Heart right ventricle (tissue), 16 donors: ENCODE measurements at regions of chr18 and their contacts with region 1.

Region 1: GRCh38 chr18:27750014-27750413 is 426.9 kb downstream of the CDH2 start:
- DNase-seq: peak in 1 of 2 donors; percentile 29
- ATAC-seq: peak in 7 of 8 donors; percentile 38 to 84 (median 77)
- H3K4me3 ChIP-seq: no peak overlapping the region
- H3K27ac ChIP-seq: no peak overlapping the region
- H3K4me1 ChIP-seq: no peaks in the 10 kb centered on the region
- H3K27me3 ChIP-seq: no peaks in the 10 kb centered on the region
- CTCF ChIP-seq: peak in 7 of 9 donors; percentile 54 to 73 (median 65)

Region 2: DNA sequence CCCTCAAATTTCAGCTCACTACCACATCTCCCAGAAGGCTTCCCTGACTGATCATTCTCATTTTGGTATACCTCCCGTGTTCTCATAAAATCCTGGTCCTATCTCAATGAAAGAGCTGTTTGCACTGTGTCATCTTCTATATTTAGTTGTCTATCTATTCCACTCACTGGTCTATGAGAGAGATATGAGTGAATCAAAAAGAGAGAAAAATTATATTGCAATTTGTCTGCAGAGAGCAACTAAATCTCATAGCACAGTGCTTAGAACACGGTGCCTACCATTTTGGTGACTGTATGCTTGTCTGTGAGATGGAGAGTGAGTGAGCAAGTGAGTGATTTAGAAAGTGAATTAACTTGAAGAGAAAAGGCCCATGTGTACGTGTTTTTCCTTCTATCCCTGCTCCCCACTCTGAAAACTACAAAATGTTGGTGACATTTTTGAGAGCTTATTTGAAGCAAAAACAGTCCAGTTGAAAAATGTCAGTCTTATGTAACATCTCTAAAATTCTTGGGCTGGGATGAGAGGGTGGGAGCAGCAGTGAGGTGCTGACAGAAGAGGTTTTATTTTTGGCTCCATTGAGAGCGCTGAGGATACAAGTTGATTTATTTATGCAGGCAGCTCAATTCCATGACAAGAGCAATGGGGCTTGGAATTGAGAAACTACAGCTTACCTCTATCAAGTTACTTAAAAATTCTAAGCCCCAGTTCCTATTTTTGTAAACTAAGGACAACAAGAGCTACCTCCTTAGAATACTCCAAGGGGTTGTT is 191.4 kb before region 1 on chr18:
- intact Hi-C with region 1: no loop called
- DNase-seq: no peak
- ATAC-seq: peak; percentile 35 to 90 (median 68)
- H3K4me3 ChIP-seq: no peak overlapping the region
- H3K27ac ChIP-seq: peak overlapping the region in 5 of 10 donors; percentile 13 to 61 (median 43)
- H3K4me1 ChIP-seq: peaks cover 0 to 15% (median 3%) of the 10 kb centered on the region in 9 donors
- H3K27me3 ChIP-seq: no peaks in the 10 kb centered on the region
- CTCF ChIP-seq: no peak

Region 3: DNA sequence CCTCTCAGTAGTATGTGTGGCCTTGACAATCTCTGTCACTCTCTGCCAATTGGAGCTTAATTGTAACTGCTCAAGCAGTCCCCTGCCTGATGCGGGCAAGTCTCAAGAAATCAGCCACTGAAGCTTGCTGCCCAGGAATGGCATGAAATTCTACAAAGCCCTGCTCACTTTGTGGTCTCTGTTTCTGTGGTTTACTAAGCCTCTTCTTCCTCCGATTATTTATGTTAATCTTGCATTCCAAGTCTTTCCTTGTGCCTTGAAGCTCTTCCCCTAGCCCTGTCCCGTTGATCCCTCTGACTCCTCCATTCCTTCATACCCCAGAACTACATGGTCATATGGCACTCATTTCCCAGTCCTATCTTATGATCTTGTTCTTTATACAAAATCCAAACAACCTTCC is 75.6 kb before region 1 on chr18:
- intact Hi-C with region 1: no loop called
- DNase-seq: no peak
- ATAC-seq: no peak
- H3K4me3 ChIP-seq: no peak overlapping the region
- H3K27ac ChIP-seq: no peak overlapping the region
- H3K4me1 ChIP-seq: no peaks in the 10 kb centered on the region
- H3K27me3 ChIP-seq: no peaks in the 10 kb centered on the region
- CTCF ChIP-seq: no peak

Region 4: DNA sequence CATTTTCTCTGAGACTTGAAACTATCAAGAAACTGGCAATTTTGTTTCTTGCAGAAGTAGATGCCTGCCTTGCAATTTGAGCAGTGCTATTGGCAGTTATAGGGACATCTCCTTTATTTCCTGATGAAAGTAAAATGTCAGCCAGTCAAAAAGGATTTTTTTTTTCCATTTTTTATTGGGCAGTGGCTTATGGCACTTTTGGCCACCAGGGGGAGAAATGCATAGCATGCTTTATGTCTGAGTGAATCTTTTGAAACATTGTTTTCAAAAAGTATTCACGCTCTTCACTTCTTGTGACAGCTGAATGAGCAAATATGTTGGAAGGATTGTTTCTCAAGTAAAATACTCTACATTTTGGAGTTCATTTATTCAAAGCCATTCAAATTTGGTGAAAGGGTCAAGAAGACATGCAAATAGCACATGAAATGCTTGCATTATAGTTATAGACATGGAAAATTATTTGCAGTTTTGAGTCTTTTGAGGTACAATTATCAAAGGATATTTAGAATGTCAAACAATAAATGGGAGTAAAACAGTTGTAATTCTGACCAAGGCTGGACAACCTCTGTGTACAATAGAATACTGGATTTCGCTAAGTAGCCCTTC is 64.1 kb before region 1 on chr18:
- intact Hi-C with region 1: loop called in 3 of 10 experiments (anchors 5 kb)
- DNase-seq: no peak
- ATAC-seq: no peak
- H3K4me3 ChIP-seq: no peak overlapping the region
- H3K27ac ChIP-seq: no peak overlapping the region
- H3K4me1 ChIP-seq: peaks cover 0 to 14% (median 0%) of the 10 kb centered on the region in 9 donors
- H3K27me3 ChIP-seq: no peaks in the 10 kb centered on the region
- CTCF ChIP-seq: peak; percentile 34 to 63 (median 53)